Mammary epithelial cell (primary cell): ENCODE measurements at regions of chr11 and their contacts with region 1.

Region 1: DNA sequence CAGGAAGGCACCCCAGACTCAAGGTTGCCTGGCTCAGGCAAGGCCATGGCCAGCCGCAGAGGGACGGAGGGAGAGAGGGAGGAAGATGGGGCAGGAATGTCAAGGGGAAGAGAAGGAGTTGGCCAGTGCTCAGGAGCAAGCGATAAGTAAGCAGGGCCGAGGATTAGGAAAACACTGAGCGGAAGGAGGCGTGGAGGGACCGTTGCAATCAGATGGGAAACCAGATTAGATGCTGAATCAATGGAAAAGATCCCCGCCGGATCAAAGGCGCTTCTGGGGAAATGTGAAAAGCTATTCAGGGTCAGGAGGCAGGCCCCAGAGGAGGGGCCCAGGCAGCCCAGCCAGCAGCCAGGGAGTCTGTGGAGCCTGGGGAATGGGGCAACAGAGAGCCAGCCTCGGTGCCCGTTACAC is 26.6 kb upstream of the MYEOV start:
- DNase-seq: no peak
- H3K4me3 ChIP-seq: no peak overlapping the region
- H3K27ac ChIP-seq: no peak overlapping the region
- H3K4me1 ChIP-seq: no peaks in the 10 kb centered on the region
- H3K27me3 ChIP-seq: no peaks in the 10 kb centered on the region
- CTCF ChIP-seq: no peak

Region 2: GRCh38 chr11:69183613-69184012 is 83.8 kb before region 1 on chr11:
- CTCF ChIA-PET with region 1: no interaction called
- dilution Hi-C with region 1: loop called (anchors 5 kb)
- in situ Hi-C with region 1: no loop called
- intact Hi-C with region 1: no loop called
- DNase-seq: no peak
- H3K4me3 ChIP-seq: no peak overlapping the region
- H3K27ac ChIP-seq: no peak overlapping the region
- H3K4me1 ChIP-seq: no peaks in the 10 kb centered on the region
- H3K27me3 ChIP-seq: no peaks in the 10 kb centered on the region
- CTCF ChIP-seq: no peak